Posterior cingulate gyrus (tissue), 11 donors: ENCODE measurements at regions of chr19 and their contacts with region 1.

Region 1: DNA sequence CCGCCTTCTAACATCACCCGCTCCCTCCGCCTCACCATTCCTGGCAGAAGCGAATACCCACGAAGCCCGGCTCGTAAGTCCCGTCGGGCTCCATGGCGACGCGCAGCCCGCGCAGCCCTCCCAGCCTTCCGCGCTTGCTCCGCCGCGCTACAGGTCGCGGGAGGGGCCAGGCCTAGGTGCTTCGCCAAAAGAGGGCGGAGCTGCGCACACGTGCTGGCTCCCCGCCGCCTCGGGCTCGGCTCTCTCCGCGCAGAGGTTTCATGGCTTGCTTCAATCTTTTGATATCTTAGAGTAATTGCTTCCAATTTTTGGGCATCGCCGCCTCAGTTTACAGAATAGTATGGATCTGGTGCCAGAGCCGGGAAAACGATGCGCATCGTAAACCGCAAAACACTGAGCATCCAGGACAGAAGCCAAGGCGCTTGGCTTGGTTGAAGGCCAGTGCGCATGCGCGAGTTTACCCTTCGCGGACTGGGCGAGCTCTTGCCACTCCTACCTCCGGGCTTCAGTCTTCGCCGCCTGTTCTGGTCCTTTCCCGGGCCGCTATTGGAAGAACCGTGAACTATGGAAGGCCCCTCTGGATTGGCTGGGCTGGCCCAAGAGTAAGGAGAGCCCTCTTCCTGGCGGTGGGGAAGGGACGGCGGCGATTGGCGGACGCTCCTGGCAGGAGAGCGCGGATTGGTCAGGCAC is at the start of gene POLR2I:
- DNase-seq: peak; percentile 99 to 100 (median 100)

Region 2: DNA sequence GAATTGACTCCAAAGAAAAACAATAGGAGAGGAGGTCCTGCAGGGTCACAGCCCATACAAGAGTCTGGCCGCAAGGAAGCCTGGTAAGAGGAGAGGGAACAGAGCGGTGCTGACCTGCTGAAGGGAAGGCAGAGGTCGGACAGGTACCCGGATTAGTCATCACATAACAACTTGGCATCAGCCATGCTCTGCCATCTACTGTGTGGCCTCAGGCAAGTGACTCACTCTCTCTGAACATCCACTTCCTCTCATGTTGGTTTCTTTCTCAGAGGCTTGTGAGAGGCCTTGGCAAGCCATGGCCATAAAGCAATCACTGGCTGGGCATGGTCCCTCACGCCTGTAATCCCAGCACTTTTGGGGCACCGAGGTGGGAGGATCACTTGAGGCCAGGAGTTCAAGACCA is 17.6 kb after region 1 on chr19:
- intact Hi-C with region 1: loop called (anchors 2 kb)
- DNase-seq: no peak

Region 3: GRCh38 chr19:36225219-36225892 is 110.4 kb after region 1 on chr19:
- intact Hi-C with region 1: no loop called
- DNase-seq: no peak